ENCODE measurements at regions of chr9 and their contacts with region 1.

Region 1: GRCh38 chr9:93028448-93029006 is 30.0 kb upstream of the SUSD3 start:
- DNase-seq: peak; percentile 32 to 91 (median 80)
- ATAC-seq: peak; percentile 85 to 92
- H3K4me3 Mint-ChIP-seq: peak overlapping the region; percentile 66 to 95 (median 83)
- H3K27ac Mint-ChIP-seq: peak overlapping the region; percentile 96 to 100 (median 99)
- H3K4me1 Mint-ChIP-seq: peaks cover 38 to 91% (median 87%) of the 10 kb centered on the region in 4 donors
- H3K27me3 Mint-ChIP-seq: no peaks in the 10 kb centered on the region

Region 2: GRCh38 chr9:92954049-92954861 is 74.3 kb before region 1 on chr9:
- POLR2A ChIA-PET with region 1: interaction called, 23 read pairs
- DNase-seq: peak; percentile 52 to 92 (median 82)
- ATAC-seq: peak; percentile 87 to 95
- H3K4me3 Mint-ChIP-seq: peak overlapping the region; percentile 74 to 93 (median 87)
- H3K27ac Mint-ChIP-seq: peak overlapping the region; percentile 82 to 99 (median 98)
- H3K4me1 Mint-ChIP-seq: peaks cover 34 to 87% (median 79%) of the 10 kb centered on the region in 4 donors
- H3K27me3 Mint-ChIP-seq: no peaks in the 10 kb centered on the region

Region 3: DNA sequence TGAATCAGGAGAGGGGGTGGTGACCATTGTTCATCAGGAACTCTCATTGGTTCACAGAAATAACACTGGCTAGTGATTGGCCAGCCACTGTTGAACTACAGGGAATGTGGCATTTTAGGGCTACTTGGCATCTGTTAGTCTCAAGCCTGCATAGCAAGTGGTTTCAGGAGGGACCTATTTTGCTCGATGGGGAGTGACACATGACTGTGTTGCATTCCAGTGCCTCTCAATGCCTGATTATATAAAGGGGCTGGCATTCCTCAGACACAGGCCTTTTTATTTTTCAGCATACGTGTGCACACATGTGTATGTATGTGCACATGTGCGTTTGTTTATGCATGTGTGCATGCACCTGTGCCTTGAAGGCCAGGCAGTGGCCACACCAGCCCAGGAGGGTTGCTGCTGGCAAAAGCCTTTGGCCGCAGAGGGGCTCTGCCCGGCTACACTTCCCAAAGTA is 58.0 kb before region 1 on chr9:
- POLR2A ChIA-PET with region 1: interaction called, 167 read pairs
- DNase-seq: no peak
- ATAC-seq: no peak
- H3K4me3 Mint-ChIP-seq: peak overlapping the region; percentile 86 to 97 (median 92)
- H3K27ac Mint-ChIP-seq: peak overlapping the region; percentile 91 to 100 (median 98)
- H3K4me1 Mint-ChIP-seq: peaks cover 45 to 97% (median 85%) of the 10 kb centered on the region in 4 donors
- H3K27me3 Mint-ChIP-seq: no peaks in the 10 kb centered on the region

Region 4: GRCh38 chr9:93013856-93014582 is 14.5 kb before region 1 on chr9:
- POLR2A ChIA-PET with region 1: interaction called, 85 read pairs
- DNase-seq: peak in 1 of 10 donors; percentile 7
- ATAC-seq: no peak
- H3K4me3 Mint-ChIP-seq: no peak overlapping the region
- H3K27ac Mint-ChIP-seq: peak overlapping the region; percentile 19 to 87 (median 72)
- H3K4me1 Mint-ChIP-seq: peaks cover 5 to 35% (median 17%) of the 10 kb centered on the region in 4 donors
- H3K27me3 Mint-ChIP-seq: no peaks in the 10 kb centered on the region

Region 5: GRCh38 chr9:93058355-93059096 is 30.0 kb after region 1 on chr9 and contains the start of gene SUSD3:
- POLR2A ChIA-PET with region 1: interaction called, 608 read pairs
- DNase-seq: peak; percentile 57 to 80 (median 62)
- ATAC-seq: peak; percentile 57 to 63
- H3K4me3 Mint-ChIP-seq: peak within 1 kb of the TSS; percentile 85 to 96 (median 92)
- H3K27ac Mint-ChIP-seq: peak within 1 kb of the TSS; percentile 93 to 100 (median 100)
- H3K4me1 Mint-ChIP-seq: peaks cover 37 to 80% (median 73%) of the 10 kb centered on the region in 4 donors
- H3K27me3 Mint-ChIP-seq: no peaks in the 10 kb centered on the region
- polyA plus RNA-seq, gene SUSD3: 86.7 to 208 (median 145) TPM

Region 6: GRCh38 chr9:93095205-93096130 is 66.9 kb after region 1 on chr9:
- POLR2A ChIA-PET with region 1: interaction called, 22 read pairs
- DNase-seq: peak; percentile 98 to 100 (median 100)
- ATAC-seq: peak; percentile 78 to 82
- H3K4me3 Mint-ChIP-seq: peak overlapping the region; percentile 73 to 91 (median 87)
- H3K27ac Mint-ChIP-seq: peak overlapping the region; percentile 91 to 98 (median 97)
- H3K4me1 Mint-ChIP-seq: peaks cover 44 to 81% (median 75%) of the 10 kb centered on the region in 4 donors
- H3K27me3 Mint-ChIP-seq: no peaks in the 10 kb centered on the region

Measured in naive thymus-derived CD8-positive, alpha-beta T cell (primary cell).